OCI-LY7 (cell line): ENCODE measurements at regions of chr12 and their contacts with region 1.

Region 1: GRCh38 chr12:90013409-90013808 is 304.8 kb upstream of the ATP2B1 start:
- DNase-seq: peak; percentile 50
- H3K4me3 ChIP-seq: no peak overlapping the region
- H3K27ac ChIP-seq: no peak overlapping the region
- H3K4me1 ChIP-seq: no peaks in the 10 kb centered on the region
- CTCF ChIP-seq: peak; percentile 69

Region 2: GRCh38 chr12:89552376-89552775 is 461.0 kb before region 1 on chr12:
- CTCF ChIA-PET with region 1: no interaction called
- POLR2A ChIA-PET with region 1: no interaction called
- intact Hi-C with region 1: loop called (anchors 2 kb)
- DNase-seq: no peak
- H3K4me3 ChIP-seq: no peak overlapping the region
- H3K27ac ChIP-seq: no peak overlapping the region
- H3K4me1 ChIP-seq: no peaks in the 10 kb centered on the region
- CTCF ChIP-seq: no peak

Region 3: DNA sequence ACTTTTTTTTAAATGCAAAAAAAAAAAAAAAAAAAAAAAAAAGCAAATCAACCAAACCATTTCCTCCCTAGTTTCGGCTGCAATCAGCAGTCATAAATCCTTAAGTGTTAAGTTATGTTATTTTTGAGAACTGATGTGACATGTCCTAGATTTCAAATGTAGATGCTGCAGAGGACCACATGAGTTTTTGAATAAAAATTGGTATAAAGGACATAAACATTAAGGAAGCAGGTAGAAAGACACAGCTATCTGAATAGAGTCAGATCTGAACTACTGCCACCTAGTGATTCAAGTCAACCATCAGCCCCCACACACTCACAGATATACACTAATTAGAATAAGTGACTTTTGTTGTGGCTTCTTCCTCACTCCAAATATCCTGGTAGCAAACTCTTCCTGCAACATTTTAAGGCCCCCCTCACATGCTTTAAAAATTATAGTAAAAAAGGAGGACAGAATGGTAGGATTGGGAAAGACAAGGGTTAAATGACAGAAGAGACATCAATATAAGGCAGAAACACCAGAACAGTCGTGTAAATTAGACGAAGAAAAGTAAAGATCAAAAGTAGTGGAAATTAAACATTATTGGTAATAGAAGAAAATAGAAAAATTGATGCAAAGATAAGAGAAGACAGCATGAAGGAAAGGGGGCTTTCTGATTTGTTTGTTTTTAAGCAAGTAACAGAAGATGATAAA is 89.7 kb after region 1 on chr12:
- CTCF ChIA-PET with region 1: no interaction called
- POLR2A ChIA-PET with region 1: interaction called, 3 read pairs
- intact Hi-C with region 1: loop called (anchors 5 kb)
- DNase-seq: peak; percentile 69
- H3K4me3 ChIP-seq: no peak overlapping the region
- H3K27ac ChIP-seq: no peak overlapping the region
- H3K4me1 ChIP-seq: peaks cover 11% of the 10 kb centered on the region
- CTCF ChIP-seq: peak; percentile 91